Cardiac septum (tissue), 1 donor: ENCODE measurements at regions of chr2 and their contacts with region 1.

Region 1: DNA sequence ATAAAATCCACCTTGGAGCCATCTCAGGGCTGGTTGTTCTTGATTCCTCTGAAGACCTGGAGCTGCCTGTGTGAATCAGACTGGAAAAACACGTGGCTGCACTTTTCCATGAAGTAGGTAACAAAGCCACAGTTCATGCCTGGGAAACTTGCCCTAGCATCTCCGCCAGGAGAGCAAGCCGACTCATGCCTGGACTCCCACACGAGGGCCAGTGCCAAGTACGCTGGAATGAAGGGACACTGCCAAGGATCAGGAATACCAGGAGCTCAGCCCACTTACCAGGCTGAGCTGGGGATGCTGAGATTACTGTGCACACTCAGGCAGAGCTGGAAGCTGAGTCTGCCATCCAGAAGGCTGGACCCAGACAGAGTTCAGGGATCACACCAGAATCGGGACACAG is 10.9 kb upstream of the FHL2 start:
- DNase-seq: peak; percentile 92

Region 2: GRCh38 chr2:105369747-105370690 is 39.7 kb before region 1 on chr2:
- intact Hi-C with region 1: loop called (anchors 2 kb)
- DNase-seq: peak; percentile 92

Region 3: GRCh38 chr2:105431367-105432043 is 21.8 kb after region 1 on chr2:
- intact Hi-C with region 1: loop called (anchors 2 kb)
- DNase-seq: peak; percentile 90

Region 4: DNA sequence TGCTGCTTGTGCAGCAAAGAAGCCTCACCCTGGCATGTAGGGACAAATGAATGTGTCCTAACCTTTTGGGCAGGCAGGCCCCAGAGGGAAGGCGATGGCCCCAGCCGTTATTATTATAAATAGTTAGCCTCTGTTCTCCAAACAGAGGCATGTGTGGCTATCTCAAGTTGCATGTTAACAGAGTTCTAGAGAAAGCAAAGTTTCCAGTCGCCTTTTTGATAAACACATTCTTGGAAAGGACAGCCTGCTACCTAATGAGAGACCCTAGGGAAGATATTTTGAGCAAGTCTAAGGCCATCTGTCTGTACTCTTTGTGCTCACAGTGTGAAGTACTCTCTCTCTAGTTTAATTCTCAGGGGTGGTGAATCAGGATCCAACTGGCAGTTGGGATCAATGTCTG is 86.6 kb after region 1 on chr2:
- intact Hi-C with region 1: loop called (anchors 2 kb)
- DNase-seq: no peak